GM18951 (cell line): ENCODE measurements at regions of chr16 and their contacts with region 1.

Region 1: GRCh38 chr16:29107299-29107698 is 122.4 kb downstream of the LAT start:
- POLR2A ChIP-seq: no peak

Region 2: DNA sequence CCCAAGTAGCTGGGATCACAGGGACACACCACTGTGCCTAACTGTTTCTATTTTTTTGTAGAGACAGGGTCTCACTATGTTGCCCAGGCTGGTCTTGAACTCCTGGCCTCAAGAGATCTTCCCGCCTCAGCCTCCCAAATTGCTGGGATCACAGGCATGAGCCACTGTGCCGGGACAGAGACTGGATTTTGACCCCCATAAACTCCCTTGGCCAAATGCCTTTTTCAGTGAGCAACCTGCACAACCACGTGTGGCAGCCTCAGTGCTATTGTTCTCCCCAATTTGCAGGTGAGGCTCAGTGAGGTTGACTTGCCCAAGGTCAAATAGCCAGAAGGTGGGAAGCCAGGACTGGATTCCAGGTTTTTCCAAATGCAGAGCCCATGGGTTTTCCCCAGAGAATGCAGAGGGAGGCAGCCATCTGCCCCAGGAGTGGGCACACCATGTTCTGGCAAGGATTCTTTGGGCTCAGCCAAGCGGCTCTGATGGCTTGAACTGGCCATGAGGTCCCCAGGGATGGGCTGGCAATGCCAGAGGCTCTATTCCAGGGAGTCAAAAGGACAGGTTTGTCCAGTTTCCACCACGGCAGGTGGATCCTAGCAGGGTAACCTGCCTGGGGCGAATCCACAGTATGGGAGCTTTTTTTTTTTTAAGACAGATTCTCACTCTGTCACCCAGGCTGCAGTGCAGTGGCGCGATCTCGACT is 602.4 kb before region 1 on chr16:
- in situ Hi-C with region 1: no loop called
- POLR2A ChIP-seq: no peak

Region 3: DNA sequence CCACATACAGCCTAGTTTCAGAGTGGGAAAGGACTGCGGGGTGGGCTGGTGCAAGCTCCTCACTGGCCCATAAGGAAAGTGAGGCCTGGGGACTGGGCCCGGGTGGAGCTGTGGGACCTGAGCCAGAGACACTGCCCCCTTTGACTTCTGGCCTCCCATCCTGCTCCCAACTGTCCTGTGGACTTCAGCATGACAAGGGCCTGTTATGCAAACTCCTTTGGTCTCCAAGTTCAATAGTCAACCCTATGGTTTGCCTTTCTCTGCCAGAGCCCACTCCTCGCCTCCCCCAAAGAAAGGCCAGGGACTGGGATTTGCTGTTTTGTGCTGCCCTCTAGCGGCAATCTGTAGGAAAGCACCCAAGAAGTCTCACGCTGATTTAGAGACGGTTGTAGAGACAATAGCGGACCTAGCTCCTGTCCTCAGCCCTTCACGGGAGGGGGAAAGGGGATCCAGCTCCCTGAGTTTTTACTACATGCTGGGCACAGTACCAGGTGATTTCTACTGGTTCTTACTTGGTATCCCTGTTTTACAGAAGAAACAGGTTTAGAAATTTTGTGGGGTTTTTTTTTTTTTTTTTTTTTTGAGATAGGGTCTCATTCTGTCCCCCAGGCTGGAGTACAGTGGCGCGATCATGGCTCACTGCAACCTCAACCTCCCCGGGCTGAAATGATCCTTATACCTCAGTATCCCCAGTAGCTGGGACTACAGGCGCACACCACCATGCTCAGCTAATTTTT is 925.0 kb after region 1 on chr16:
- in situ Hi-C with region 1: loop called (anchors 25 kb)
- POLR2A ChIP-seq: no peak